Activated T-helper 1 cell treated with anti-CD3 and anti-CD28 coated beads, Interleukin-12 subunit alpha, Interleukin-12 subunit beta, Interleukin-2, Interleukin-4 antibody, amounts not matched to agents 30 ng/mL and 10 ng/mL and 1 ng/mL, durations not matched to agents 14 hours and 24 hours and 36 hours (primary cell): ENCODE measurements at regions of chr4 and their contacts with region 1.

Region 1: DNA sequence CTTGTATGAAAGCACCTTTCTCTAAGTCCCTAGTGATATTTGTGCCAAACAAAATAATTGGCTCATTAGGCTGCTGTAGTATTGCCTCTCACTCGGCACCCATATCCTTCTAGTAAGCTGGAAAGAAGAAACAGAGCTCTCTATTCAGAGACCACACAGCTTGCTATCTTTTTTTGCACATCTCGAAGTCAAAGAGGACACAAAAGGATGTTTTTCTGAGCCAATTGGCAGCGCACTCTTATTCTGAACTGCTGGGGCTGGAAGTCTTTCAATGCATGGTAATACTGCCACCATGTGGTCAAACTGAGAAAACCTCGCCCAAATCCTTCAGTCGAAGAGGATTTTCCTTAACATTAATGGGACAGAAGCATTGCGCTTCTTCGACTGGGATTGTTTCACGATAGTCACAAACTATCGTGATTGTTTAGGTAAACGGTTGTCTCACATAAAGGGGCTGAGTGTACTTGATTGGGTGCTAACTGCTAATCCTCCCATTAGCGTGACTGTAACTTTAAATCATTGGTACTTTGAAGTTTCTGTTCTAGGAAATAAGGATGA is 572.0 kb upstream of the LCORL start:
- DNase-seq: peak; percentile 14
- H3K4me3 Mint-ChIP-seq: no peak overlapping the region
- H3K27ac Mint-ChIP-seq: no peak overlapping the region
- H3K4me1 Mint-ChIP-seq: peaks cover 8% of the 10 kb centered on the region
- H3K27me3 Mint-ChIP-seq: no peaks in the 10 kb centered on the region

Region 2: GRCh38 chr4:17636696-17637622 is 956.6 kb before region 1 on chr4:
- intact Hi-C with region 1: loop called (anchors 5 kb)
- DNase-seq: peak; percentile 48
- H3K4me3 Mint-ChIP-seq: no peak overlapping the region
- H3K27ac Mint-ChIP-seq: no peak overlapping the region
- H3K4me1 Mint-ChIP-seq: no peaks in the 10 kb centered on the region
- H3K27me3 Mint-ChIP-seq: no peaks in the 10 kb centered on the region

Region 3: DNA sequence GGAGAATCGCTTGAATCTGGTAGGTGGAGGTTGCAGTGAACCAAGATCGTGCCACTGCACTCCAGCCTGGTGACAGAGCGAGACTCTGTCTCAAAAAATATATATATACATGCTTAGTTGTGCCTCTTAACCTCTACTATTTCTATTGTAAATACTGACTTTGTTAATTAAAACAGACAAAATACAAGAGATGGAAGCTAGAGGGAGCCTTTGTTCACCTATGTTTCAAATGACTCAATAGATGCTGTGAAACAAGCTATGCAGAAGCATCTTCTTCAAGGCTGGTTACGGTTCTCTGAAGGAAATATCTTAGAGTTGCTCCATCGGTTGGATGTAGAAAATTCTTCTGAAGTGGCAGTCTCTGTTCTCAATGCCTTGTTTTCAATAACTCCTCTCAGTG is 776.5 kb before region 1 on chr4:
- intact Hi-C with region 1: loop called (anchors 1 kb)
- DNase-seq: no peak
- H3K4me3 Mint-ChIP-seq: peak overlapping the region; percentile 51
- H3K27ac Mint-ChIP-seq: peak overlapping the region; percentile 63
- H3K4me1 Mint-ChIP-seq: peaks cover 66% of the 10 kb centered on the region
- H3K27me3 Mint-ChIP-seq: no peaks in the 10 kb centered on the region

Region 4: GRCh38 chr4:17934286-17934685 is 659.2 kb before region 1 on chr4:
- intact Hi-C with region 1: loop called (anchors 1 kb)
- DNase-seq: no peak
- H3K4me3 Mint-ChIP-seq: no peak overlapping the region
- H3K27ac Mint-ChIP-seq: no peak overlapping the region
- H3K4me1 Mint-ChIP-seq: no peaks in the 10 kb centered on the region
- H3K27me3 Mint-ChIP-seq: no peaks in the 10 kb centered on the region